Activated T-helper 1 cell treated with anti-CD3 and anti-CD28 coated beads, Interleukin-12 subunit alpha, Interleukin-12 subunit beta, Interleukin-2, Interleukin-4 antibody, amounts not matched to agents 30 ng/mL and 10 ng/mL and 1 ng/mL, durations not matched to agents 14 hours and 24 hours and 36 hours (primary cell): ENCODE measurements at regions of chr14 and their contacts with region 1.

Region 1: DNA sequence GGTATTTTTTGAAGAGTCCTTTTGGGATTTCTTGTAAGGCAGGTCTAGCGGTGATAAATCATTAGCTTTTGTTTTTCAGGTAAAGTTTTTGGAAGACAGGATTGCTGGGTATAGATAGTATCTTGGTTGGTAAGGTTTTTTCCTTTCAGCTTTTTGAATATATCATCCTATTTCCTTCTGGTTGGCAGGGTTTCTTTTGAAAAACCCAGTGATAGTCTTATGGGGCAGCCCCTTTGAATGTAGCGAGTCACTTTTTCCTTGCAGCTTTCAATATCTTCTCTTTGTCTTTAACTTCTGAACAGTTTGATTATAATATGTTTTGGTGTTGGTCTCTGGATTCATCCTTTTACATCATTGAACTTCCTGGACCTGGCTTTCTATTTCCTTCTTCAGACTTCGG is 20.2 kb downstream of the TMX1 start:
- DNase-seq: no peak
- H3K4me3 Mint-ChIP-seq: no peak overlapping the region
- H3K27ac Mint-ChIP-seq: peak overlapping the region; percentile 79
- H3K4me1 Mint-ChIP-seq: peaks cover 20% of the 10 kb centered on the region
- H3K27me3 Mint-ChIP-seq: no peaks in the 10 kb centered on the region

Region 2: GRCh38 chr14:50985124-50985858 is 274.9 kb before region 1 on chr14:
- intact Hi-C with region 1: no loop called
- DNase-seq: no peak
- H3K4me3 Mint-ChIP-seq: no peak overlapping the region
- H3K27ac Mint-ChIP-seq: no peak overlapping the region
- H3K4me1 Mint-ChIP-seq: no peaks in the 10 kb centered on the region
- H3K27me3 Mint-ChIP-seq: peaks cover 5% of the 10 kb centered on the region

Region 3: GRCh38 chr14:51228890-51229289 is 31.3 kb before region 1 on chr14:
- intact Hi-C with region 1: no loop called
- DNase-seq: no peak
- H3K4me3 Mint-ChIP-seq: no peak overlapping the region
- H3K27ac Mint-ChIP-seq: no peak overlapping the region
- H3K4me1 Mint-ChIP-seq: no peaks in the 10 kb centered on the region
- H3K27me3 Mint-ChIP-seq: peaks cover 7% of the 10 kb centered on the region

Region 4: GRCh38 chr14:51239813-51240803 is 20.1 kb before region 1 on chr14 and contains the start of gene TMX1:
- intact Hi-C with region 1: loop called (anchors 1 kb)
- DNase-seq: peak; percentile 87
- H3K4me3 Mint-ChIP-seq: no peak within 1 kb of the TSS
- H3K27ac Mint-ChIP-seq: no peak within 1 kb of the TSS
- H3K4me1 Mint-ChIP-seq: peaks cover 12% of the 10 kb centered on the region
- H3K27me3 Mint-ChIP-seq: no peaks in the 10 kb centered on the region
- total RNA-seq, gene TMX1: 51.1 and 51.3 TPM in 2 replicates

Region 5: GRCh38 chr14:51410897-51411296 is 150.7 kb after region 1 on chr14:
- intact Hi-C with region 1: no loop called
- DNase-seq: no peak
- H3K4me3 Mint-ChIP-seq: no peak overlapping the region
- H3K27ac Mint-ChIP-seq: no peak overlapping the region
- H3K4me1 Mint-ChIP-seq: no peaks in the 10 kb centered on the region
- H3K27me3 Mint-ChIP-seq: peaks cover 7% of the 10 kb centered on the region